Tibial artery (tissue), 4 donors: ENCODE measurements at regions of chr6 and their contacts with region 1.

Region 1: DNA sequence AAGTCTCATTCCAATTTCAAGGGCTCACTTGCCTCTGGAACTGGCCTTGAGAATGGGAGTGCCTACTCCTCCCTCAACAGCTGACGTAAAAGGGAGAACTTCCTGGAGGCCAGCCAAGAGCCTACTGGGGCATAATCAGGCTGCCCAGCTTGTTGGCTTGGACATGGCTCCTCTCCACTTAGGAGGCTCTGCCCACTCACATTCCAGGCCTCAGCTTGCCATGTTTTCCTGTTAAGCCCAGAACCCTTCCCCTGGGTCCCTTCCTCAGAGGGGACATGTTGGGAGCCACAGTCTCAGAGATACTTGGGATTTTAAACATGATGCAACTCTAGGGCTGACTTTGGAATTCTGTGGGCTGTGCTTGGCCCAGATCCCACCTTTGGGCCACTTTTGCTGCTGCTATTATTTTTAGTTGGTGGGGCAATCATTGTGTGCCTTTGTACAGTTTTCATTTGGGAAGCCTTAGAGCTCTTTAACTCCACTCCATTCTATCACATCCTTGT is 31.5 kb upstream of the ADTRP start:
- DNase-seq: peak; percentile 85 to 96
- H3K4me3 ChIP-seq: no peak overlapping the region
- H3K27ac ChIP-seq: peak overlapping the region; percentile 68 to 70
- H3K4me1 ChIP-seq: peaks cover 0 to 25% (median 15%) of the 10 kb centered on the region in 4 donors
- H3K27me3 ChIP-seq: no peaks in the 10 kb centered on the region
- CTCF ChIP-seq: no peak

Region 2: GRCh38 chr6:11711003-11711983 is 98.8 kb before region 1 on chr6:
- intact Hi-C with region 1: loop called (anchors 5 kb)
- DNase-seq: no peak
- H3K4me3 ChIP-seq: peak overlapping the region in 1 of 2 donors; percentile 1
- H3K27ac ChIP-seq: peak overlapping the region; percentile 39 to 73
- H3K4me1 ChIP-seq: peaks cover 0 to 37% (median 23%) of the 10 kb centered on the region in 4 donors
- H3K27me3 ChIP-seq: no peaks in the 10 kb centered on the region
- CTCF ChIP-seq: no peak

Region 3: DNA sequence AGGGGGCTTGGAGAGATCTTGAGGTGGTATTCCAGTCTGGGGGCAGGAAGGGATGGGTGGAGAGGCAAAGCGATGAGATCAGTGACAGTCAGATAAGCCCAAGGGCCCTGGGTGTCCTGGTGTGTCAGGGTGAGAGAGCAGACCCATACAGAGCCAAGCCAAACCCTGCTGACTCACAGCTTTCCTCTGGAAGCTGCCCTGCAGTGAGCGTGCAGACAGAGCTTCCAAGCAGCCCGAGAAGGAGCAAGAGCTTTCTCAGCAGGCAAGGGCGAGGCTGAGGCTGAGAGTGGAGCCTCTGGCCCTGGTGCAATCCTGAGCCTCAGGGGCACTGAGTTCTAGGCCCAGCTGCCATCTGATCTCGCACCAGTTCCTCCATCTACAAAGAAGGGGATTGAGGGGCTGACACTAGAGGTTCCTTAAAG is 110.9 kb after region 1 on chr6:
- intact Hi-C with region 1: no loop called
- DNase-seq: peak; percentile 72 to 83
- H3K4me3 ChIP-seq: no peak overlapping the region
- H3K27ac ChIP-seq: peak overlapping the region; percentile 37 to 62
- H3K4me1 ChIP-seq: peaks cover 0 to 33% (median 12%) of the 10 kb centered on the region in 4 donors
- H3K27me3 ChIP-seq: no peaks in the 10 kb centered on the region
- CTCF ChIP-seq: no peak